ENCODE measurements at regions of chr6 and their contacts with region 1.

Region 1: DNA sequence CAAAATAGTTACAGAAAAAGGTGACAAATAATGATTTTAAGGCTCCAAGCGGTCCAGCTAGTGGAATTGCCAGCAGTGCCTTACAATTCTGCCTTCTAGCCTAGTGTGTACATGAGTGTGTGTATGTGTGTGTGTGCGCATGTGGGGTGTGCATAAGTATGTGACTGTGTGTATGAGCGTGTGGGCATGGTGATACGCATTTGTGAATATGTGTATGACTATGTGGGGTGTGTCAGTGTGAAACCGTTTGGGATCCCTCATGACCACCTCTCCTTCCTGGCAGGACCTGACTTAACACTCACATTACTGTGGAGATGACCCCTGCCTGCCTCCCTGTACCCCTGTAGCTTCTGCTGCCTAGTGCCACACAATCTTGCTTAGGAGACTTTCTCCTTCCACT is 40.4 kb upstream of the RNF182 start:
- DNase-seq: no peak
- CTCF ChIP-seq: no peak

Region 2: DNA sequence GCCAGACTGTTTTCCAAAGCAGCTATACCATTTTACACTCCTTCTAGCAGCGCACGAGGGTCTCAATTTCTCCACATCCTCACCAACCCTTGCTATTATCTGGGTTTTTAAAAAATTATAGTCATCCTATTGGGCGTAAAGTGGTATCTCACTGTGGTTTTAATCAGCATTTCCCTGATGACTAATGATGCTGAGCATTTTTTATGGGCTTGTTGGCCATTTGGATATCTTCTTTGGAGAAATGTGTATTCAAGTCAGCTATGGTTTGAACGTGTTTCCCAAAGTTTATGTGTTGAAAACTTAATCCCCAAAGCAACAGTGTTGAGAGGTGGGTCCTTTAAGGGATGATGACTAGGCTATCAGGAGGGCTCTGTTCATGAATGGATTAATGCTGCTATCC is 76.7 kb before region 1 on chr6:
- CTCF ChIA-PET with region 1: no interaction called
- POLR2A ChIA-PET with region 1: no interaction called
- DNase-seq: no peak
- CTCF ChIP-seq: no peak

Region 3: GRCh38 chr6:13873285-13874190 is 10.9 kb before region 1 on chr6:
- CTCF ChIA-PET with region 1: interaction called, 14 read pairs
- POLR2A ChIA-PET with region 1: no interaction called
- DNase-seq: peak; percentile 89
- CTCF ChIP-seq: peak; percentile 94

Measured in GM10248 (cell line).